CD4-positive, alpha-beta memory T cell (primary cell): ENCODE measurements at regions of chr11 and their contacts with region 1.

Region 1: DNA sequence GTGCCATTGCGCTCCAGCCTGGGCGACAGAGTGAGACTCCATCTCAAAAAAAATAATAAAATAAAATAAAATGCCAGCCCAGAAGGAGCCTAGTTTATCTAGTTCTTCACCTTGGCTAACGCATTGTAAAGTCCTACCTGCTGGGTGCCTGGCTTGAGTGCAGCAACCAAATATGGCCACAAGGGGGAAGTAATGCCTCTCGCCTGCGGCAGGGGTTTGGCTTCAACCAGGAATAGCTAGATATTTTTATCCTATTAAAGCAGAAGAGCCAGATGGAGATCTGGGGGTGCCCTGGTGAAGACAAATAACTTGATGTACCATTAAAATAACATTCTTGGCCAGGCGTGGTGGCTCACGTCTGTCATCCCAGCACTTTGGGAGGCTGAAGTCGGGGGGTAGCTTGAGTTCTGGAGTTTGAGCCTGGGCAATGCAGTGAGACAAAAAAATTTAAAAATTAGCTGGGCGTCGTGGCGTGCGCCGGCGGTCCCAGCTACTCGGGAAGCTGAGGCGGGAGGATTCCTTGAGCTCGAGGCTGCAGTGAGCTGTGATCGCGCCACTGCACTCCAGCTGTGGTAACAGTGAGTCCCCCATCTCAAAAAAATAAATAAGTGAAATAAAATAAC is 20.6 kb upstream of the PLEKHB1 start:
- DNase-seq: peak; percentile 60 to 70 (median 66)
- H3K4me3 ChIP-seq: no peak overlapping the region
- H3K4me3 Mint-ChIP-seq: peak overlapping the region in 1 of 8 donors; percentile 24
- H3K27ac ChIP-seq: no peak overlapping the region
- H3K27ac Mint-ChIP-seq: no peak overlapping the region
- H3K4me1 ChIP-seq: no peaks in the 10 kb centered on the region
- H3K4me1 Mint-ChIP-seq: peaks cover 0 to 4% (median 0%) of the 10 kb centered on the region in 4 donors
- H3K27me3 ChIP-seq: no peaks in the 10 kb centered on the region
- H3K27me3 Mint-ChIP-seq: peaks cover 6 to 13% of the 10 kb centered on the region in 2 donors

Region 2: GRCh38 chr11:73612601-73613140 is 13.1 kb before region 1 on chr11:
- CTCF ChIA-PET with region 1: interaction called, 15 read pairs
- POLR2A ChIA-PET with region 1: no interaction called
- intact Hi-C with region 1: no loop called
- DNase-seq: no peak
- H3K4me3 ChIP-seq: no peak overlapping the region
- H3K4me3 Mint-ChIP-seq: no peak overlapping the region
- H3K27ac ChIP-seq: no peak overlapping the region
- H3K27ac Mint-ChIP-seq: no peak overlapping the region
- H3K4me1 ChIP-seq: no peaks in the 10 kb centered on the region
- H3K4me1 Mint-ChIP-seq: no peaks in the 10 kb centered on the region
- H3K27me3 ChIP-seq: no peaks in the 10 kb centered on the region
- H3K27me3 Mint-ChIP-seq: peaks cover 3 to 4% of the 10 kb centered on the region in 2 donors

Region 3: GRCh38 chr11:73640592-73640991 is 14.8 kb after region 1 on chr11:
- CTCF ChIA-PET with region 1: interaction called, 24 read pairs
- POLR2A ChIA-PET with region 1: no interaction called
- intact Hi-C with region 1: no loop called
- DNase-seq: no peak
- H3K4me3 ChIP-seq: no peak overlapping the region
- H3K4me3 Mint-ChIP-seq: no peak overlapping the region
- H3K27ac ChIP-seq: no peak overlapping the region
- H3K27ac Mint-ChIP-seq: peak overlapping the region in 2 of 7 donors; percentile 57 to 58
- H3K4me1 ChIP-seq: no peaks in the 10 kb centered on the region
- H3K4me1 Mint-ChIP-seq: peaks cover 3 to 8% (median 6%) of the 10 kb centered on the region in 4 donors
- H3K27me3 ChIP-seq: no peaks in the 10 kb centered on the region
- H3K27me3 Mint-ChIP-seq: peaks cover 0 to 4% of the 10 kb centered on the region in 2 donors

Region 4: GRCh38 chr11:73647459-73648100 is 21.8 kb after region 1 on chr11:
- CTCF ChIA-PET with region 1: interaction called, 24 read pairs
- POLR2A ChIA-PET with region 1: interaction called, 5 read pairs
- intact Hi-C with region 1: no loop called
- DNase-seq: peak; percentile 91 to 94 (median 93)
- H3K4me3 ChIP-seq: peak overlapping the region; percentile 54
- H3K4me3 Mint-ChIP-seq: peak overlapping the region; percentile 83 to 94 (median 91)
- H3K27ac ChIP-seq: peak overlapping the region; percentile 46
- H3K27ac Mint-ChIP-seq: peak overlapping the region; percentile 72 to 98 (median 96)
- H3K4me1 ChIP-seq: peaks cover 8% of the 10 kb centered on the region
- H3K4me1 Mint-ChIP-seq: peaks cover 9 to 24% (median 20%) of the 10 kb centered on the region in 4 donors
- H3K27me3 ChIP-seq: no peaks in the 10 kb centered on the region
- H3K27me3 Mint-ChIP-seq: no peaks in the 10 kb centered on the region

Region 5: DNA sequence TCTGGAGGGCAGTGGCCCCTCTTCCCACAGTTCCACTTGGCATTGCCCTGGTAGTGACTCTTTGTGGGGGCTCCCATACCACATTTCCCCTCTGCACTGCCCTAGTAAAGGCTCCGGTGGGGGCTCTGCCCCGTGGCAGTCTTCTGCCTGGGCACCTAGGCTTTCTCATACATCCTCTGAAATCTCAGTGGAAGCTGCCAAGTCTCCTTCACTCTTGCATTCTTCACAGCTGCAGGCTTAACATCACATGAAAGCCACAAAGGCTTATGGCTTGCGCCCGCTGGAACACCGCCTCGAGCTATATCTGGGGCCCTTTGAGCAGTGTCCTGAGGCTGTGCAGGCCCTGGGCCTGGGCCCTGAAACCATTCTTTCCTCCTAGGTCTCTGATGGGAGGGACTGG is 45.9 kb after region 1 on chr11:
- CTCF ChIA-PET with region 1: interaction called, 320 read pairs
- POLR2A ChIA-PET with region 1: no interaction called
- intact Hi-C with region 1: no loop called
- DNase-seq: no peak
- H3K4me3 ChIP-seq: no peak overlapping the region
- H3K4me3 Mint-ChIP-seq: no peak overlapping the region
- H3K27ac ChIP-seq: no peak overlapping the region
- H3K27ac Mint-ChIP-seq: no peak overlapping the region
- H3K4me1 ChIP-seq: no peaks in the 10 kb centered on the region
- H3K4me1 Mint-ChIP-seq: peaks cover 0 to 1% (median 0%) of the 10 kb centered on the region in 4 donors
- H3K27me3 ChIP-seq: no peaks in the 10 kb centered on the region
- H3K27me3 Mint-ChIP-seq: no peaks in the 10 kb centered on the region

Region 6: GRCh38 chr11:73710964-73711363 is 85.2 kb after region 1 on chr11:
- CTCF ChIA-PET with region 1: no interaction called
- POLR2A ChIA-PET with region 1: no interaction called
- intact Hi-C with region 1: no loop called
- DNase-seq: no peak
- H3K4me3 ChIP-seq: no peak overlapping the region
- H3K4me3 Mint-ChIP-seq: no peak overlapping the region
- H3K27ac ChIP-seq: no peak overlapping the region
- H3K27ac Mint-ChIP-seq: peak overlapping the region in 2 of 7 donors; percentile 4 to 41
- H3K4me1 ChIP-seq: no peaks in the 10 kb centered on the region
- H3K4me1 Mint-ChIP-seq: peaks cover 0 to 2% (median under 1%) of the 10 kb centered on the region in 4 donors
- H3K27me3 ChIP-seq: no peaks in the 10 kb centered on the region
- H3K27me3 Mint-ChIP-seq: no peaks in the 10 kb centered on the region